ENCODE measurements at regions of chr12 and their contacts with region 1.

Region 1: GRCh38 chr12:64610149-64610678 is at the start of gene RASSF3:
- DNase-seq: peak; percentile 77 to 81
- ATAC-seq: peak; percentile 76 to 92 (median 86)
- H3K4me3 ChIP-seq: peak within 1 kb of the TSS; percentile 63 to 99 (median 90)
- H3K27ac ChIP-seq: peak within 1 kb of the TSS; percentile 87 to 99 (median 96)
- H3K4me1 ChIP-seq: peaks cover 0 to 41% (median 31%) of the 10 kb centered on the region in 9 donors
- H3K27me3 ChIP-seq: no peaks in the 10 kb centered on the region
- CTCF ChIP-seq: no peak
- total RNA-seq, gene RASSF3: 55.1 to 159 (median 89.3) TPM

Region 2: GRCh38 chr12:64551698-64552097 is 58.5 kb before region 1 on chr12:
- intact Hi-C with region 1: loop called in 5 of 10 experiments (anchors 2 to 10 kb)
- DNase-seq: no peak
- ATAC-seq: no peak
- H3K4me3 ChIP-seq: no peak overlapping the region
- H3K27ac ChIP-seq: peak overlapping the region in 3 of 10 donors; percentile 2 to 19 (median 10)
- H3K4me1 ChIP-seq: peaks cover 0 to 24% (median 6%) of the 10 kb centered on the region in 9 donors
- H3K27me3 ChIP-seq: no peaks in the 10 kb centered on the region
- CTCF ChIP-seq: no peak

Region 3: DNA sequence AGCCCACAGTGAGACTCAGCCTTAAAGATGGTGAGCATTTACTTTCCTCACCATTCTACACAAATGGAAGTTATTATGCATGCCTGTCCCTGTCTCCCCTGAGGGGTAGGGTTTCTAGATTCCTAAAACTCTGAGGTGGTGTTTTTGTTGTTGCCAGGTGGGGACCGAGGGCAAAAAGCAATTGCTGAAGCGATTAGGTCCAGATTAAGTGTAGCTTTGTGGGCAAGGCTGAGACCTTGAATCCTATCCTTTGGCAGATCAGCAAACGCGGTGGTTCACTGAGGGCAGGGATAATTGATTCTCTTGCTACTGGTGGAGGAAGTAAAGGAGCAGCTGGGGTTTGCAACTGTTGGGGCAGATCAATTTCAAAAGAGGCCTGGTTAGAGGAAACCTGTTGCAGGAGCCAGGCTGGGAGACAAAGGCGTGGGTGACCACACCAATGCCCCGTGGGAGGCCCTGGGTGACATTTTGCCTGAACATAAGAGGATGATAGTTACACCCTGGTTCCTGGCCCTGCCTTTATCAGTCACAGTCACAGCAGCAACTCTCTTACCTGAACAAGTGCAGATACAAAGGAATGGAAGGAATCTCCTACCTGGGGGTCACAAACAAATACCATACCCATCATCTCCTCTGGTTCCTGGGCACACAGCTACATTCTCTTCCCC is 43.3 kb before region 1 on chr12:
- intact Hi-C with region 1: loop called in 4 of 10 experiments (anchors 5 kb)
- DNase-seq: no peak
- ATAC-seq: no peak
- H3K4me3 ChIP-seq: no peak overlapping the region
- H3K27ac ChIP-seq: no peak overlapping the region
- H3K4me1 ChIP-seq: peaks cover 2 to 42% (median 36%) of the 10 kb centered on the region in 9 donors
- H3K27me3 ChIP-seq: no peaks in the 10 kb centered on the region
- CTCF ChIP-seq: no peak

Region 4: GRCh38 chr12:64679487-64679983 is 69.3 kb after region 1 on chr12:
- intact Hi-C with region 1: loop called in 6 of 10 experiments (anchors 5 kb)
- DNase-seq: peak; percentile 68 to 69
- ATAC-seq: peak in 7 of 8 donors; percentile 24 to 58 (median 46)
- H3K4me3 ChIP-seq: peak overlapping the region in 6 of 10 donors; percentile 4 to 26 (median 12)
- H3K27ac ChIP-seq: peak overlapping the region; percentile 2 to 89 (median 82)
- H3K4me1 ChIP-seq: peaks cover 17 to 100% (median 81%) of the 10 kb centered on the region in 9 donors
- H3K27me3 ChIP-seq: no peaks in the 10 kb centered on the region
- CTCF ChIP-seq: no peak

Measured in heart right ventricle (tissue), 16 donors.